ENCODE measurements at regions of chr12 and their contacts with region 1.

Region 1: DNA sequence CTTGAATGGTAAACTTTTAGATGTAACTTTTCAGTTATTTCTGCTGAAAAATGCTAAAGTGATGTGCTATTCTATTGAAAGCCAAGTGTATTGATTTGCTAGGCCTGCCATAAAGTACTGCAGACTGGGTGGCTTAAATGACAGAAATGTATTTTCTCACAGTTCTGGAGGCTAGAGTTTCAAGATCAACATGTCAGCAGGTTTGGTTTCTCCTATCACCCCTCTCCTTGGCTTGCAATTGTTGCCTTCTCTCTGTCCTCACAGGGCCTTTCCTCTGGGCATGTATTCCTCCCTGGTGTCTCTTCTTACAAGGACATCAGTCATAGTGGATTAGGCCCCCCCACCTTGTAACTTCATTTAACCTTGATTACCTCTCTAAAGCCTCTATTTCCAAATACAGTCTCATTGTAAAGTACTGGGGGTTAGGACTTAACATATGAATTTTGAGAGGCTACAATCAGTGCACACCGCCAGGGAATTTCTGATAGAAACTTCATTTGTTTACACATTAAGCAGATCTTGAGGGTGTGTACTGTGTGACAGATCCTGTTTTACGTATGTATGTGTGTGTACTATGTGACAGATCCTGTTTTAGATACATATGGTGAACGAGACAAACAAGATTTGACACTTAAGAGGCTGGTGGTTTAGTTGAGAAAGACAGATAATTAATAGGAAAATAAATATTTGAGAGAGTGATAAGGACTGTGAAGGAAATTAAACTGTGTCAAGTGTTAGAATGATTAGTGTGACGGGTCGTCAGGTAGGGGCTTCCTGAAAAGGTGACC is 49.5 kb downstream of the ADIPOR2 start:
- DNase-seq: peak in 1 of 2 donors; percentile 34
- ATAC-seq: peak; percentile 89 to 96 (median 92)
- H3K4me3 ChIP-seq: no peak overlapping the region
- H3K4me3 Mint-ChIP-seq: peak overlapping the region; percentile 74
- H3K27ac ChIP-seq: peak overlapping the region; percentile 72
- H3K27ac Mint-ChIP-seq: peak overlapping the region; percentile 88
- H3K4me1 ChIP-seq: peaks cover 13% of the 10 kb centered on the region
- H3K4me1 Mint-ChIP-seq: peaks cover 60 to 67% of the 10 kb centered on the region in 2 donors
- H3K27me3 ChIP-seq: no peaks in the 10 kb centered on the region
- H3K27me3 Mint-ChIP-seq: no peaks in the 10 kb centered on the region
- CTCF ChIP-seq: no peak

Region 2: GRCh38 chr12:1690578-1691122 is 49.7 kb before region 1 on chr12 and contains the start of gene ADIPOR2:
- intact Hi-C with region 1: loop called (anchors 5 kb)
- DNase-seq: peak; percentile 95 to 98
- ATAC-seq: peak; percentile 95 to 99 (median 98)
- H3K4me3 ChIP-seq: peak within 1 kb of the TSS; percentile 86
- H3K4me3 Mint-ChIP-seq: peak within 1 kb of the TSS; percentile 97
- H3K27ac ChIP-seq: peak within 1 kb of the TSS; percentile 87
- H3K27ac Mint-ChIP-seq: peak within 1 kb of the TSS; percentile 97
- H3K4me1 ChIP-seq: peaks cover 14% of the 10 kb centered on the region
- H3K4me1 Mint-ChIP-seq: peaks cover 35 to 37% of the 10 kb centered on the region in 2 donors
- H3K27me3 ChIP-seq: no peaks in the 10 kb centered on the region
- H3K27me3 Mint-ChIP-seq: peaks cover 0 to 2% of the 10 kb centered on the region in 2 donors
- CTCF ChIP-seq: no peak
- total RNA-seq, gene ADIPOR2: 38.6 to 48.3 (median 44.0) TPM

Region 3: GRCh38 chr12:1706633-1706981 is 33.7 kb before region 1 on chr12:
- intact Hi-C with region 1: loop called (anchors 5 kb)
- DNase-seq: no peak
- ATAC-seq: no peak
- H3K4me3 ChIP-seq: no peak overlapping the region
- H3K4me3 Mint-ChIP-seq: no peak overlapping the region
- H3K27ac ChIP-seq: no peak overlapping the region
- H3K27ac Mint-ChIP-seq: peak overlapping the region; percentile 62 to 67
- H3K4me1 ChIP-seq: peaks cover 4% of the 10 kb centered on the region
- H3K4me1 Mint-ChIP-seq: peaks cover 72 to 81% of the 10 kb centered on the region in 2 donors
- H3K27me3 ChIP-seq: no peaks in the 10 kb centered on the region
- H3K27me3 Mint-ChIP-seq: no peaks in the 10 kb centered on the region
- CTCF ChIP-seq: no peak